ENCODE measurements at regions of chr4 and their contacts with region 1.

Region 1: GRCh38 chr4:151015459-151016347 is 619 bp upstream of the LRBA start:
- DNase-seq: peak; percentile 82 to 94
- ATAC-seq: peak; percentile 80 to 93 (median 86)
- H3K4me3 ChIP-seq: peak overlapping the region; percentile 77
- H3K4me3 Mint-ChIP-seq: peak overlapping the region; percentile 100
- H3K27ac ChIP-seq: peak overlapping the region; percentile 92
- H3K27ac Mint-ChIP-seq: peak overlapping the region; percentile 89 to 98
- H3K4me1 ChIP-seq: peaks cover 21% of the 10 kb centered on the region
- H3K4me1 Mint-ChIP-seq: peaks cover 33 to 40% of the 10 kb centered on the region in 2 donors
- H3K27me3 ChIP-seq: no peaks in the 10 kb centered on the region
- H3K27me3 Mint-ChIP-seq: no peaks in the 10 kb centered on the region
- CTCF ChIP-seq: no peak

Region 2: DNA sequence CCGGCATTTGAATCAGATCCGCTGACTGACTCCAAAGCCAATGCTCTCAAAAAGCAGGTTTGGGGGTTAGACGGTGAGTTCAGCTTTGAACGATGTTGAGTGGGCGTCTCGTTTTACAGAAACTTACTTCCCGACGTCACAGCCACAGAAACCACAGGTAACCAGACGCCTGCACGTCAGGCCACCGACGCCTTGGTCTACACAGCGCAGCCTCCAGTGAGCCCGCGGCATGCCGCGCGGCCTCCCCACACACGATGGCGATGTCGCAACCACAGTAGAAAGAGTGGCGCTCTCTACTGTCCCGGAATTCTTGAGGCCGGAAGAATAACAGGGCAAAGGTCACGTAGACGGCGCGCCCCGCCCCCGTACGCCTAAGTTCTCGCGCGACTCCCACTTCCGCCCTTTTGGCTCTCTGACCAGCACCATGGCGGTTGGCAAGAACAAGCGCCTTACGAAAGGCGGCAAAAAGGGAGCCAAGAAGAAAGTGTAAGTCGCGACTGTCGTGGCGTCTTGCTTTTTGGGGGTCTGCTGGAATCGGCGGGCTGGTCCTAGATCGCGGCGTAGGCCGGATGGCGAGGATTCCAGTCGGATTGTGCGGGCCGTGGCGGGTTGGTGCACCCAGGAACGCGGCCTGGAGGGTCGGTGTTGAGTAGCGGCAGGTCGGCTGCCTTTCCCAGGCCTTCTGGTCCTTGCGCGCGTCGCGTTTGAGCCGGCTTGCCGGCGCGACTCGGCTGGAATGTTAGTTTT is 83.7 kb after region 1 on chr4 and contains the start of gene RPS3A:
- intact Hi-C with region 1: loop called (anchors 1 kb)
- DNase-seq: peak; percentile 99
- ATAC-seq: peak; percentile 92 to 99 (median 93)
- H3K4me3 ChIP-seq: peak within 1 kb of the TSS; percentile 77
- H3K4me3 Mint-ChIP-seq: peak within 1 kb of the TSS; percentile 97
- H3K27ac ChIP-seq: peak within 1 kb of the TSS; percentile 87
- H3K27ac Mint-ChIP-seq: peak within 1 kb of the TSS; percentile 94 to 95
- H3K4me1 ChIP-seq: peaks cover 14% of the 10 kb centered on the region
- H3K4me1 Mint-ChIP-seq: peaks cover 30 to 38% of the 10 kb centered on the region in 2 donors
- H3K27me3 ChIP-seq: no peaks in the 10 kb centered on the region
- H3K27me3 Mint-ChIP-seq: peaks cover 10 to 13% of the 10 kb centered on the region in 2 donors
- CTCF ChIP-seq: peak; percentile 77
- total RNA-seq, gene RPS3A: 1,074 to 1,354 (median 1,315) TPM